Activated CD4-positive, alpha-beta T cell treated with anti-CD3 and anti-CD28 coated beads for 36 hours (primary cell): ENCODE measurements at regions of chr9 and their contacts with region 1.

Region 1: DNA sequence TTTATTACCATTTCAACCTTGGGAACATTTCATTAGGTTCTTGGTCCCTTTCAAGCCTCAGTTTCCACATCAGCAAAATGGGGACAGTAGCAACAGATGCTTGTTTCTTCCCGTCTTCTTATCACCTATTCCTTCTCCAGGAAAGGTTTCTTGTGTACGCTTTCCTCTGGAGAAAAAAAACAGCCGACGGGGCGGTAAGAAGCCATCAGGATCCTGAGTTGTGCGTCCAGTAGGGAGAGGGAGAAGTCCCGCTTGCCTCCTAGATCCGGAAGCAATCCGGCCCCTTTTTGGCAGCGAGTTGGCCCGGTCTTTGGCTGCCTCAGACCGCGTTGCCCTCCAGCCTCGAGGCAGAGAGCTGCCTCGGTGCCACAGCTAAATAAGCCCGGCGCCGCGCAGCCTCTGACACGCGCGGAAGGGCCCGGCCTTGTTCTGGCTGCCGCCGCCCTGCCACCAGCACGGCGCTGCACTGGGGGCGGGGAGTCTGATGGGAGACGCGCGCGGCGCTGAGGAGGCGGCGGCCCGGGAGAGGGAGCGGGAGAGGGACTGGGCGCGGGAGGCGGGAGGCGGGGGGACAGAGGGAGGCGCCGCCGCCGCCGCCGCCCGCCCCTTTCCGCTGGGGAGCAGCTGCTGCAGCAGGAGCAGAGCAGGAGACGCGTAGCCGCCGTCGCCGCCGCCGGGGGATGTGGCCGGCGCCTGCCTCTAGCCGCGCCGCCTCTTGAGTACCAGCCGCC is at the start of gene SLC44A1:
- DNase-seq: peak; percentile 96
- ATAC-seq: peak; percentile 96
- H3K4me3 Mint-ChIP-seq: peak within 1 kb of the TSS; percentile 86
- H3K27ac Mint-ChIP-seq: peak within 1 kb of the TSS; percentile 77
- H3K4me1 Mint-ChIP-seq: peaks cover 22% of the 10 kb centered on the region
- H3K27me3 Mint-ChIP-seq: peaks cover 12% of the 10 kb centered on the region
- total RNA-seq, gene SLC44A1: 9.7 to 10.4 TPM

Region 2: GRCh38 chr9:104927912-104928740 is 316.0 kb before region 1 on chr9 and contains the start of gene ABCA1:
- CTCF ChIA-PET with region 1: no interaction called
- POLR2A ChIA-PET with region 1: no interaction called
- intact Hi-C with region 1: loop called in 1 of 2 experiments (anchors 2 kb)
- DNase-seq: peak; percentile 90
- ATAC-seq: peak; percentile 71
- H3K4me3 Mint-ChIP-seq: peak within 1 kb of the TSS; percentile 79
- H3K27ac Mint-ChIP-seq: peak within 1 kb of the TSS; percentile 73
- H3K4me1 Mint-ChIP-seq: peaks cover 21% of the 10 kb centered on the region
- H3K27me3 Mint-ChIP-seq: peaks cover 5% of the 10 kb centered on the region
- total RNA-seq, gene ABCA1: 4.5 to 5.2 TPM

Region 3: GRCh38 chr9:104991144-104991953 is 252.8 kb before region 1 on chr9:
- CTCF ChIA-PET with region 1: no interaction called
- POLR2A ChIA-PET with region 1: interaction called, 3 read pairs
- intact Hi-C with region 1: loop called in 1 of 2 experiments (anchors 2 kb)
- DNase-seq: peak; percentile 93
- ATAC-seq: peak; percentile 73
- H3K4me3 Mint-ChIP-seq: peak overlapping the region; percentile 80
- H3K27ac Mint-ChIP-seq: peak overlapping the region; percentile 98
- H3K4me1 Mint-ChIP-seq: peaks cover 37% of the 10 kb centered on the region
- H3K27me3 Mint-ChIP-seq: peaks cover 29% of the 10 kb centered on the region

Region 4: GRCh38 chr9:105405514-105406131 is 161.5 kb after region 1 on chr9:
- CTCF ChIA-PET with region 1: no interaction called
- POLR2A ChIA-PET with region 1: no interaction called
- intact Hi-C with region 1: loop called (anchors 1 to 5 kb)
- DNase-seq: peak; percentile 69
- ATAC-seq: peak; percentile 92
- H3K4me3 Mint-ChIP-seq: peak overlapping the region; percentile 21
- H3K27ac Mint-ChIP-seq: peak overlapping the region; percentile 3
- H3K4me1 Mint-ChIP-seq: peaks cover 27% of the 10 kb centered on the region
- H3K27me3 Mint-ChIP-seq: peaks cover 66% of the 10 kb centered on the region

Region 5: DNA sequence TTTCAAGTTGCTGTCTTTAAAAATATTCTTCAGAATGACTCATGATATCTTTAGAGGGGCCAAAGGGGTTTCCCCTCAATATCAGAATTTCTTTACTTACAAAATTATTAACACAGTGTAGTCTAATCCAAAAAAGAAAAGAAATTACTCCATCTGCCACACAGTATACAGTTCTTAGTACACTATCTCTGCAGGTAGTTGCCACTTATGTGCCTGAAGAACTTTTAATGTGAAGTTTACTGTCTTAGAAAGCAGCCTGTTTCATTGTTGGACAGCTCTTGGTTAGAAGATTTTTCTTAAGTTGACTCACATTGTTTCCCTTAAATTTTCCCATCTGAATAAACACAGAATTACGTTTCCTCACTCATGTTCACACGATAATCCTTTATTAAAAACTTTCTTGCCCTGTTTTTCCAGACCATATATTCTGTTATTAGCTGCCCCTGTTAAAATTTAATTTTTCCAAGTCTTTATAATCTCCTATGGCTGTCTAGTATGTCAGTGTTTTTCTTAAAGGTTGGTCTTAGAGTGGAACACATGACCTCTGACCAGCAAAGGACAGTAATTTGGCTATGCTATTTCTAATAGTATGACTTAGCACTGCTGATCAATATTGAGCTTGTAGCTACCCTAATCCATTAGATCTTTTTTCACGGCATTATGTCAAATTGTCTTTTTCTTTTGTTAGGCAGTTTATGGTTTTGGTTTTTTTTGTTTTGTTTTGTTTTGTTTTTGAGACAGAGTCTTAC is 291.9 kb after region 1 on chr9:
- CTCF ChIA-PET with region 1: no interaction called
- POLR2A ChIA-PET with region 1: no interaction called
- intact Hi-C with region 1: loop called in 1 of 2 experiments (anchors 5 kb)
- DNase-seq: no peak
- ATAC-seq: peak; percentile 33
- H3K4me3 Mint-ChIP-seq: no peak overlapping the region
- H3K27ac Mint-ChIP-seq: no peak overlapping the region
- H3K4me1 Mint-ChIP-seq: peaks cover 20% of the 10 kb centered on the region
- H3K27me3 Mint-ChIP-seq: no peaks in the 10 kb centered on the region